ENCODE measurements at regions of chr2 and their contacts with region 1.

Region 1: DNA sequence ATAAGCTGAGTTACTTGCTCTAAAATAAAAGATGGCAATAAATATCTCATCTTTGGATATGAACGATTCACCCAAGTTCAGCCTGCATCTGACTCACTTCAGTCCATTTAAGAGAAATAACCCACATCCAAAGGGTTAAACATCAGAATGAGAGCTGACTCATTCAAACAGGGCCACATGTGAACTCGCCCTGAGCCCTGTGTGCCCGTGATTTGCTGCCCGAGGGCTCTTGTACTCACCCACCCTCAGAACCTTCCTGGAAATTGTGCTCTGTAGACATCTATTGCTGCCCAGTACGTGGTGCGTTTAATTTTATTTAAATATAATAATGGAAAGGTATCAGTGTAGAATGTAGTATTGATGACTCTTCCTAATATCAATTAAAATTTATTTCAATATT is 66.9 kb upstream of the RBM44 start:
- DNase-seq: peak; percentile 44
- H3K4me3 Mint-ChIP-seq: no peak overlapping the region
- H3K27ac Mint-ChIP-seq: peak overlapping the region; percentile 75
- H3K4me1 Mint-ChIP-seq: peaks cover 59% of the 10 kb centered on the region
- H3K27me3 Mint-ChIP-seq: no peaks in the 10 kb centered on the region

Region 2: GRCh38 chr2:237558906-237559641 is 172.6 kb before region 1 on chr2:
- CTCF ChIA-PET with region 1: no interaction called
- POLR2A ChIA-PET with region 1: no interaction called
- DNase-seq: no peak
- H3K4me3 Mint-ChIP-seq: no peak overlapping the region
- H3K27ac Mint-ChIP-seq: no peak overlapping the region
- H3K4me1 Mint-ChIP-seq: peaks cover 12% of the 10 kb centered on the region
- H3K27me3 Mint-ChIP-seq: peaks cover 43% of the 10 kb centered on the region

Region 3: DNA sequence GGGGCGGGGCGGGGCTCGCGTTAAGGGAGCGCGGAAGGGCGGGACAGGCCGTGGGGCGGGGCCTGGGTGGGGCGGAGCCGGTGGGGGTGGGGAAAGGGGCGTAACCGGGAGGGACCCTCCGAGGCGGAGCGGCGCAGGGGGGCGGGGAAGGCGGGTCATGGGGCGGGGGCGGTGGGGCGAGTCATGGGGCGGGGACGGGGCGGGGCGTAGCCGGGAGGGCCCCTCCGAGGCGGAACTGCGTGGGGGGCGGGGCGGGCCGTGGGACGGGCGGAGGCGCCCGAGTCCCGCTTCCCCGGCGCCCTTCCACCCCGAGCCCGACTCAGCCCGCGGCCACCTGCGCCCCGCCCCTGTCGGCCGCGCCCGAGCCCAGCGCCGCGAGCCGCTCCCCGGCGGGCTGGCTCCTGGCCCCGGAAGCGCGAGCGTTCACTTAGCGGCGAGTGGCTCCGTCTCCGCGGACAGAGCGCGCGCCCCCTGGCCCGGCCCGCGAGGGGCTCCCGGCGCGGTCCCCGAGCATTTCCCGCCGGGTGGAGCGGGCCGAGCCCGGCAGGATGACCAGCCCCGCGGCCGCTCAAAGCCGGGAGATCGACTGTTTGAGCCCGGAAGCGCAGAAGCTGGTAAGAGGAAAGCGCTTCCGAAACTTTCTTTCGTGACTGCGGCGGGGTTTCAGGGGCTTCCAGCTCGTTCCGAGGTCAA is 39.6 kb before region 1 on chr2:
- CTCF ChIA-PET with region 1: interaction called, 5 read pairs
- POLR2A ChIA-PET with region 1: interaction called, 21 read pairs
- DNase-seq: peak; percentile 97
- H3K4me3 Mint-ChIP-seq: peak overlapping the region; percentile 93
- H3K27ac Mint-ChIP-seq: peak overlapping the region; percentile 95
- H3K4me1 Mint-ChIP-seq: peaks cover 60% of the 10 kb centered on the region
- H3K27me3 Mint-ChIP-seq: no peaks in the 10 kb centered on the region

Region 4: GRCh38 chr2:237700512-237701032 is 31.1 kb before region 1 on chr2:
- CTCF ChIA-PET with region 1: interaction called, 5 read pairs
- POLR2A ChIA-PET with region 1: interaction called, 21 read pairs
- DNase-seq: peak; percentile 70
- H3K4me3 Mint-ChIP-seq: peak overlapping the region; percentile 45
- H3K27ac Mint-ChIP-seq: peak overlapping the region; percentile 88
- H3K4me1 Mint-ChIP-seq: peaks cover 96% of the 10 kb centered on the region
- H3K27me3 Mint-ChIP-seq: no peaks in the 10 kb centered on the region

Region 5: GRCh38 chr2:237744613-237745249 is 13.1 kb after region 1 on chr2:
- CTCF ChIA-PET with region 1: interaction called, 18 read pairs
- POLR2A ChIA-PET with region 1: interaction called, 3 read pairs
- DNase-seq: peak; percentile 75
- H3K4me3 Mint-ChIP-seq: no peak overlapping the region
- H3K27ac Mint-ChIP-seq: peak overlapping the region; percentile 64
- H3K4me1 Mint-ChIP-seq: peaks cover 29% of the 10 kb centered on the region
- H3K27me3 Mint-ChIP-seq: no peaks in the 10 kb centered on the region

Region 6: GRCh38 chr2:237886685-237887481 is 155.2 kb after region 1 on chr2:
- CTCF ChIA-PET with region 1: no interaction called
- POLR2A ChIA-PET with region 1: no interaction called
- DNase-seq: no peak
- H3K4me3 Mint-ChIP-seq: no peak overlapping the region
- H3K27ac Mint-ChIP-seq: no peak overlapping the region
- H3K4me1 Mint-ChIP-seq: peaks cover 11% of the 10 kb centered on the region
- H3K27me3 Mint-ChIP-seq: no peaks in the 10 kb centered on the region